GM12878 (cell line): ENCODE measurements at regions of chr2 and their contacts with region 1.

Region 1: GRCh38 chr2:45833968-45834344 is 182.5 kb downstream of the PRKCE start:
- DNase-seq: peak; percentile 77
- ATAC-seq: peak; percentile 85
- H3K4me3 ChIP-seq: peak overlapping the region; percentile 39; the same call in 1 of the 2 replicates
- H3K27ac ChIP-seq: peak overlapping the region; percentile 70
- H3K4me1 ChIP-seq: peaks cover 54% of the 10 kb centered on the region
- H3K27me3 ChIP-seq: no peaks in the 10 kb centered on the region
- CTCF ChIP-seq: peak in 2 of 3 experiments; percentile 3 to 15; a peak in 1 of 6 replicates
- EP300 ChIP-seq: no peak
- POLR2A ChIP-seq: peak; percentile 56
- RAD21 ChIP-seq: peak; percentile 29; the same call in 1 of the 2 replicates

Region 2: DNA sequence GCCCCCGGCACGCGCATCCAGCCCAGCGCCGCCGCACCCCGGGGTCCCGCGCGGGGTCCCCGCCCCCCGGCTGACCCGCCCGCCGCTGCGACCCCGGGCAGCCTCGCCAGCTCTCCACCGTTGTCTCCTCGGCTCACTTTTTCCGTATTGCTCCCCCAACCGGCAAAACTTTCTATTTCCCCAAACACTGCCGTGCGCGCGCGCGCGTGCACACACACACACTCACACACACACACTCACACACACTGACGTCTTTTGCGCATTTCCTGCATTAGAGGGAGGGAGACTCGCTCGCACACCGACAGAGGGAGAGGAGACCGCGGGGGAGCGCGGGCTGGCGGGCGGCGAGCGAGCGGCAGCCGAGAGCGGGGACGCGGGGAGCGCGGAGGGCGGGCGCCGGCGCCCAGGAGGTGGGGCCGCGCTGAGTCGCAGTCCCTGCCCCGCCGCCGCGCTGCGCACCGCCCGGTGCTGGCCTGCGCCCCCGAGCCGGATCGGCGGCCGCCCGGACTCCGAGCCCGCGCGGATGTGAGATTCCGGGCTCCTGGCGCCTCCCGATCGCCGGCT is 183.0 kb before region 1 on chr2:
- CTCF ChIA-PET with region 1: interaction called, 36 read pairs
- POLR2A ChIA-PET with region 1: interaction called, 51 read pairs
- RAD21 ChIA-PET with region 1: interaction called, 60 read pairs
- SMC1A ChIA-PET with region 1: interaction called, 110 read pairs
- in situ Hi-C with region 1: no loop called
- intact Hi-C with region 1: loop called (anchors 2 kb)
- DNase-seq: peak; percentile 76
- ATAC-seq: peak; percentile 79
- H3K4me3 ChIP-seq: peak overlapping the region; percentile 97
- H3K27ac ChIP-seq: peak overlapping the region; percentile 91
- H3K4me1 ChIP-seq: no peaks in the 10 kb centered on the region
- H3K27me3 ChIP-seq: no peaks in the 10 kb centered on the region
- CTCF ChIP-seq: peak; percentile 38 to 49 (median 48); a peak in 5 of 6 replicates
- EP300 ChIP-seq: peak; percentile 56 to 69; a peak in 1 of 4 replicates
- POLR2A ChIP-seq: peak; percentile 85
- RAD21 ChIP-seq: peak; percentile 57

Region 3: DNA sequence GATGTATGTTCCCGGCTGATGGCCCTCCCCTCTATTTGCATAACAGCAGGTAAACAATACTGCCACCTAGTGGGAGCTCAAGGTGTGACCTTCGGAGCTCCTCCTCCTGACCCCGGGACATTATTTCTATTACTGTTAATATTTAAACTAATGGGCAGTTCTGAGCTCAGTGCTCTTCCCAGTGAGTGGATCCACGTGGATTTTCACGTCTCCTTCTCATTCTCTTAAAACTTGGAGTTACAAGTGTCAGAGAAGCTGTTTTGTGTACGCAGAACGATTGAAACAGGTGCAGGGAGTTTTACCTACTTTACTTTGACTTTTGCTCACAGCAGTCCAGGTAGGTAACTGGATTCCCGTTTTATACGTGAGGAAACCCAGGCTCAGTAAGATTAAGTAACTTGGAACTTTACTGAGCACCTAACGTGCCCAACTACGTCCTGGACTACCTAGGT is 55.2 kb before region 1 on chr2:
- CTCF ChIA-PET with region 1: interaction called, 68 read pairs
- POLR2A ChIA-PET with region 1: interaction called, 4 read pairs
- RAD21 ChIA-PET with region 1: interaction called, 32 read pairs
- SMC1A ChIA-PET with region 1: interaction called, 63 read pairs
- in situ Hi-C with region 1: no loop called
- intact Hi-C with region 1: no loop called
- DNase-seq: peak; percentile 11
- ATAC-seq: peak; percentile 90
- H3K4me3 ChIP-seq: no peak overlapping the region
- H3K27ac ChIP-seq: no peak overlapping the region
- H3K4me1 ChIP-seq: peaks cover 16% of the 10 kb centered on the region
- H3K27me3 ChIP-seq: no peaks in the 10 kb centered on the region
- CTCF ChIP-seq: peak; percentile 49 to 60 (median 53); a peak in 5 of 6 replicates
- EP300 ChIP-seq: no peak
- POLR2A ChIP-seq: no peak
- RAD21 ChIP-seq: peak; percentile 72

Region 4: GRCh38 chr2:45821564-45822271 is 12.2 kb before region 1 on chr2:
- CTCF ChIA-PET with region 1: interaction called, 8 read pairs
- POLR2A ChIA-PET with region 1: interaction called, 5 read pairs
- RAD21 ChIA-PET with region 1: interaction called, 17 read pairs
- SMC1A ChIA-PET with region 1: interaction called, 28 read pairs
- in situ Hi-C with region 1: no loop called
- intact Hi-C with region 1: no loop called
- DNase-seq: no peak
- ATAC-seq: 0 out of 3 replicates have a peak, but pooled peaks have one; percentile 21
- H3K4me3 ChIP-seq: no peak overlapping the region
- H3K27ac ChIP-seq: no peak overlapping the region
- H3K4me1 ChIP-seq: no peaks in the 10 kb centered on the region
- H3K27me3 ChIP-seq: no peaks in the 10 kb centered on the region
- CTCF ChIP-seq: no peak
- EP300 ChIP-seq: no peak
- POLR2A ChIP-seq: no peak
- RAD21 ChIP-seq: no peak

Region 5: DNA sequence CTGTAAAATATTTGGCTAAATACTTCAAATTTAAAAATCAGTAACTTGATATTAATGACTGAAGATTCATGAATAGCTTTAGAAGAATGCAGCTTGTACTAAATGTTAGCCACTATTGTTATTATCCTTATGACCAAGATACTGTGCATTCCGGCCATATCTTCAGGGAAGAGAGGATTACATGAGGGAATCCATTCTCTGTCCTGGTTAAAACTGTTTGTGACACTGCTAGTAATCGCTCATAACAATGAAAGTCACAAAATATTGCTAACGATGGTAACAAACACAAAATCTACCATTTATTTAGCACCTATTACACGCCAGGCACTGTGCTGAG is 35.2 kb after region 1 on chr2:
- CTCF ChIA-PET with region 1: interaction called, 5 read pairs
- POLR2A ChIA-PET with region 1: interaction called, 26 read pairs
- RAD21 ChIA-PET with region 1: interaction called, 85 read pairs
- SMC1A ChIA-PET with region 1: interaction called, 102 read pairs
- in situ Hi-C with region 1: no loop called
- intact Hi-C with region 1: no loop called
- DNase-seq: no peak
- ATAC-seq: no peak
- H3K4me3 ChIP-seq: no peak overlapping the region
- H3K27ac ChIP-seq: no peak overlapping the region
- H3K4me1 ChIP-seq: peaks cover 23% of the 10 kb centered on the region
- H3K27me3 ChIP-seq: no peaks in the 10 kb centered on the region
- CTCF ChIP-seq: no peak
- EP300 ChIP-seq: no peak
- POLR2A ChIP-seq: no peak
- RAD21 ChIP-seq: no peak

Region 6: DNA sequence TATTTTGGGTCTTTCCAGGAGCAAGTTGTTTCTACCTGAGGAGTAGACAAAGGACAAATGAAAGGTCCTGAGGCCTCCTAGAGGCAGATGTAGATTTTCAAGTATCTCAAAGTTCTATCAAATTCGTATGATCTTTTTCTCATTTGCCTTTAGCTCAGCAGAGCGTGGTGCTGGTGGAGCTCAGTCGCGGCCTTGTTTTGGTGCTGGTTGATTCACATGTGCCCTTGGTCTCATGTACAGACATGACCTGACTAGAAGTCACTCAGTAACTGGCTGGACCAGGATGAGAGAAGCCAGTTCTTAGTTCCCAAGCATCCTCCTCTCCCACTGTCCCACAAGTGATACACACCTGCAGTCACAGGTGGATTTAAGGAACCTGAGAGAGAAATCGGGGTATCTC is 81.6 kb after region 1 on chr2:
- CTCF ChIA-PET with region 1: interaction called, 10 read pairs
- POLR2A ChIA-PET with region 1: interaction called, 5 read pairs
- RAD21 ChIA-PET with region 1: interaction called, 18 read pairs
- SMC1A ChIA-PET with region 1: interaction called, 10 read pairs
- in situ Hi-C with region 1: no loop called
- intact Hi-C with region 1: no loop called
- DNase-seq: no peak
- ATAC-seq: no peak
- H3K4me3 ChIP-seq: no peak overlapping the region
- H3K27ac ChIP-seq: no peak overlapping the region
- H3K4me1 ChIP-seq: peaks cover 26% of the 10 kb centered on the region
- H3K27me3 ChIP-seq: no peaks in the 10 kb centered on the region
- CTCF ChIP-seq: no peak
- EP300 ChIP-seq: no peak
- POLR2A ChIP-seq: no peak
- RAD21 ChIP-seq: no peak

Region 7: GRCh38 chr2:46230115-46230571 is 396.2 kb after region 1 on chr2:
- CTCF ChIA-PET with region 1: no interaction called
- POLR2A ChIA-PET with region 1: no interaction called
- RAD21 ChIA-PET with region 1: no interaction called
- SMC1A ChIA-PET with region 1: no interaction called
- in situ Hi-C with region 1: no loop called
- intact Hi-C with region 1: no loop called
- DNase-seq: peak; percentile 37
- ATAC-seq: peak; percentile 86
- H3K4me3 ChIP-seq: no peak overlapping the region
- H3K27ac ChIP-seq: peak overlapping the region; percentile 36
- H3K4me1 ChIP-seq: peaks cover 14% of the 10 kb centered on the region
- H3K27me3 ChIP-seq: no peaks in the 10 kb centered on the region
- CTCF ChIP-seq: peak; percentile 4 to 61 (median 45); a peak in 3 of 6 replicates
- EP300 ChIP-seq: no peak
- POLR2A ChIP-seq: no peak
- RAD21 ChIP-seq: peak; percentile 48; the same call in 1 of the 2 replicates